Heart left ventricle (tissue), 16 donors: ENCODE measurements at regions of chr16 and their contacts with region 1.

Region 1: GRCh38 chr16:57300387-57301125 is 16.1 kb upstream of the PLLP start:
- DNase-seq: peak; percentile 98 to 99 (median 99)
- ATAC-seq: peak; percentile 94 to 96 (median 94)
- H3K4me3 ChIP-seq: peak overlapping the region in 11 of 12 donors; percentile 20 to 57 (median 52)
- H3K27ac ChIP-seq: peak overlapping the region; percentile 66 to 94 (median 89)
- H3K4me1 ChIP-seq: peaks cover 0 to 41% (median 29%) of the 10 kb centered on the region in 12 donors
- H3K27me3 ChIP-seq: no peaks in the 10 kb centered on the region
- CTCF ChIP-seq: peak; percentile 89 to 99 (median 96)
- POLR2A ChIP-seq: peak in 1 of 2 donors; percentile 68

Region 2: DNA sequence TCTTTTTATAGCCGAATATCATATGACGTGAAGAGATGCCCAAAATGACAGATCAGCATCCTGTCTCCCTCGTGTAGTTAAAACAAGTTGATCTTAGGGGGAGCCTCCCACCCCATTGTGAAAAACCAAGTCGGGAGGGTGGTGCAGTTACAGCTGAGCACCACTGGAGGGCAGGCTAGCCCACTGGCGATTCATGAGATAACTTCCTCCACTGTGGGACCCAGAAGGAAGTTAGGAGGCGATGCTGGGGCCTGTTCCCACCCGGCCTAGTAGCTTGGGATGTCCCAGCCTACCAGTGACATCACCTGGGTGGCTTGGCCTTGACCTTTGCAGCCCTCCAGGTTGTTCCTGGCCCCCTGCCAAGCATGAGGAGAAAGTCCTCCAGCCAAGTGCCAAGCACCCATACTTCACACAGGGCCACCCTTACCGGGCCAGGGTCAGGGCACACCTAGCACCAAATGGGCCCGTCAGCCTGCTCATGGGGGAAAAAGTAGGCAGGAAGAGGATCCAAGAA is 216.2 kb before region 1 on chr16:
- intact Hi-C with region 1: loop called in 2 of 10 experiments (anchors 5 to 10 kb)
- DNase-seq: peak; percentile 66 to 83 (median 73)
- ATAC-seq: peak; percentile 39 to 86 (median 84)
- H3K4me3 ChIP-seq: no peak overlapping the region
- H3K27ac ChIP-seq: peak overlapping the region in 1 of 12 donors; percentile 44
- H3K4me1 ChIP-seq: peaks cover 0 to 13% (median 3%) of the 10 kb centered on the region in 12 donors
- H3K27me3 ChIP-seq: no peaks in the 10 kb centered on the region
- CTCF ChIP-seq: peak; percentile 95 to 99 (median 98)
- POLR2A ChIP-seq: no peak

Region 3: DNA sequence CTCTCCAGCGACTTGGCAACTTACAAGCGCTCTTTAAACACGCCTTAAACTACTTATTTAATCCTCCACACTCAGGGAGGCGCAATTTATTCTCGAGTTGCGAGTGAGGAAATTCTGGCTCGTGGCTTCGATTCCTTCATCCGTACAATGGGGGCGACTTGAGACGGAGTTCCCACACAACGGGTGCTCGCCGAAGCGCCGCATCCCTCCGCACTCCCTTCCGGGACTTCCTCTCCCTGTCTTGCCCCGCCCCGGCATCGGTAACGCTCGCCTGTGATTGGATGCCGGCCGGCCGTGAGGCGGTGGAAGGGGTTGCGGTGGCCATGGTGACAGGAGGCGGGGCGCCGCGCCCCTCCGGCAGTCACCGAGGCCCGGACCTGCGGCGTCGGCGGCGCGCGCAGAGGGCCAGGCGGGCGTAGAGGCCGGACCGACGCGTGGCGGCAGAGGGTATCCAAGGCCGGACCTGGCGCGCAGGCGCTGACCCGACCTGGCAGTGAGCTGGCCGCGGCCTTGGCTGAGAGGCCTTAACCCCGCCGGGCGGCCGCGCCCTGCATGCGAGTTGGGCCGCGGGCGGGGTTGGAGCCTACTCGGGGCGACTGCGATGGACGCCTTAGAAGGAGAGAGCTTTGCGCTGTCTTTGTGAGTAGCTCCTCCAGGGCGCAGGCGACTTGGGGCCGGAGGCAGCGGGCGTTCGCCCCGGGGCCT is 55.6 kb before region 1 on chr16 and contains the start of gene ARL2BP:
- intact Hi-C with region 1: loop called in 7 of 10 experiments (anchors 1 to 5 kb)
- DNase-seq: peak; percentile 98 to 99 (median 99)
- ATAC-seq: peak; percentile 98 to 99 (median 98)
- H3K4me3 ChIP-seq: peak within 1 kb of the TSS; percentile 36 to 94 (median 82)
- H3K27ac ChIP-seq: peak within 1 kb of the TSS; percentile 81 to 97 (median 94)
- H3K4me1 ChIP-seq: peaks cover 0 to 22% (median 14%) of the 10 kb centered on the region in 12 donors
- H3K27me3 ChIP-seq: no peaks in the 10 kb centered on the region
- CTCF ChIP-seq: peak in 6 of 12 donors; percentile 3 to 44 (median 10)
- POLR2A ChIP-seq: peak in 1 of 2 donors; percentile 86
- total RNA-seq, gene ARL2BP: 43.9 to 68.8 (median 52.1) TPM

Region 4: GRCh38 chr16:57372372-57373116 is 72.0 kb after region 1 on chr16 and contains the start of gene CX3CL1:
- intact Hi-C with region 1: loop called in 8 of 10 experiments (anchors 2 to 5 kb)
- DNase-seq: peak in 4 of 5 donors; percentile 76 to 84 (median 82)
- ATAC-seq: peak; percentile 76 to 87 (median 84)
- H3K4me3 ChIP-seq: peak within 1 kb of the TSS; percentile 30 to 88 (median 68)
- H3K27ac ChIP-seq: peak within 1 kb of the TSS; percentile 84 to 97 (median 90)
- H3K4me1 ChIP-seq: peaks cover 0 to 48% (median 15%) of the 10 kb centered on the region in 12 donors
- H3K27me3 ChIP-seq: no peaks in the 10 kb centered on the region
- CTCF ChIP-seq: peak in 9 of 12 donors; percentile 22 to 55 (median 31)
- POLR2A ChIP-seq: peak in 1 of 2 donors; percentile 91
- total RNA-seq, gene CX3CL1: 8.3 to 59.5 (median 15.4) TPM

Region 5: GRCh38 chr16:57422026-57422944 is 121.7 kb after region 1 on chr16:
- intact Hi-C with region 1: loop called in 9 of 10 experiments (anchors 1 to 2 kb)
- DNase-seq: peak in 3 of 5 donors; percentile 43 to 59 (median 46)
- ATAC-seq: peak in 3 of 4 donors; percentile 29 to 60 (median 46)
- H3K4me3 ChIP-seq: no peak overlapping the region
- H3K27ac ChIP-seq: peak overlapping the region in 1 of 12 donors; percentile 39
- H3K4me1 ChIP-seq: peaks cover 4 to 52% (median 33%) of the 10 kb centered on the region in 12 donors
- H3K27me3 ChIP-seq: no peaks in the 10 kb centered on the region
- CTCF ChIP-seq: peak; percentile 48 to 80 (median 62)
- POLR2A ChIP-seq: no peak